Caco-2 (cell line): ENCODE measurements at regions of chr2 and their contacts with region 1.

Region 1: DNA sequence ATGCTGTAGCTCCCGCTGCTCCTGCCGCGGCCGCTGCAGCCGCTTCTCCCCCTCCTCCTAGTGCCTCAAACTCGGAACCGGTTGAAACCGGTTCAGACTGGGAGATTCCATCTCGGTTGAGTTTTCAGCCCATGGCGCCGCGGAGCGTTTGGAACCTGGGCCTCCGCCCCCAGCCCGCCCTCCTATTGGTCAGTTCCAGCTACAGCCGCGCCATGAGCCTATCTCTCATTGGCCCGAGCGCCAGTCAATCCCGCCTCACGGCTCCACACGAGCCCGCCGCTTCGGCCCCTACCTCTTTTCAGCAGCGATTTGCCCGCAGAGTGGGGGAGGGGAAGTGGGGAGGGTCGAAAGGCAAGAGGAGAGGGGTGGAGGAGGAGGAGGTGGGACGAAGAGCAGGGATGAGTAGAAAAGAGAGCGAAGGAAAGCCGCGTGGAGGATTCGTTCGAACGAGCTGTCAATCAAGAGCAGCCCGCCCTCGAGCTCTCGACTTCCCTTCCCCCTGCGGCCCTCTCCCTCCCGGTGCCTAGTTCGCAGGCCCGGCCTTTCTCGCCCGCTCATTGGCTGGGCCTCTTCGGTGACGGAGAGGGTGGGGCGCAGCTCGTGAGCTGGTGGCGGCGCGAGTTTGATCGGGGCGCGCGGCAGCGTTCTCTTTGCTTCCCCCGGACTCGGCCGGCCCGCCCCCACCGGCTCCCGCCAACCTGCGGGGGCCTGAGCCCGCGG is at the start of gene XPO1:
- DNase-seq: peak; percentile 100
- H3K4me3 ChIP-seq: peak within 1 kb of the TSS; percentile 99
- H3K4me3 Mint-ChIP-seq: peak within 1 kb of the TSS; percentile 94
- H3K27ac Mint-ChIP-seq: peak within 1 kb of the TSS; percentile 94
- H3K4me1 ChIP-seq: peaks cover 9% of the 10 kb centered on the region
- H3K4me1 Mint-ChIP-seq: no peaks in the 10 kb centered on the region
- H3K27me3 ChIP-seq: no peaks in the 10 kb centered on the region
- H3K27me3 Mint-ChIP-seq: no peaks in the 10 kb centered on the region
- CTCF ChIP-seq: no peak
- total RNA-seq, gene XPO1: 218 and 241 TPM in 2 replicates

Region 2: DNA sequence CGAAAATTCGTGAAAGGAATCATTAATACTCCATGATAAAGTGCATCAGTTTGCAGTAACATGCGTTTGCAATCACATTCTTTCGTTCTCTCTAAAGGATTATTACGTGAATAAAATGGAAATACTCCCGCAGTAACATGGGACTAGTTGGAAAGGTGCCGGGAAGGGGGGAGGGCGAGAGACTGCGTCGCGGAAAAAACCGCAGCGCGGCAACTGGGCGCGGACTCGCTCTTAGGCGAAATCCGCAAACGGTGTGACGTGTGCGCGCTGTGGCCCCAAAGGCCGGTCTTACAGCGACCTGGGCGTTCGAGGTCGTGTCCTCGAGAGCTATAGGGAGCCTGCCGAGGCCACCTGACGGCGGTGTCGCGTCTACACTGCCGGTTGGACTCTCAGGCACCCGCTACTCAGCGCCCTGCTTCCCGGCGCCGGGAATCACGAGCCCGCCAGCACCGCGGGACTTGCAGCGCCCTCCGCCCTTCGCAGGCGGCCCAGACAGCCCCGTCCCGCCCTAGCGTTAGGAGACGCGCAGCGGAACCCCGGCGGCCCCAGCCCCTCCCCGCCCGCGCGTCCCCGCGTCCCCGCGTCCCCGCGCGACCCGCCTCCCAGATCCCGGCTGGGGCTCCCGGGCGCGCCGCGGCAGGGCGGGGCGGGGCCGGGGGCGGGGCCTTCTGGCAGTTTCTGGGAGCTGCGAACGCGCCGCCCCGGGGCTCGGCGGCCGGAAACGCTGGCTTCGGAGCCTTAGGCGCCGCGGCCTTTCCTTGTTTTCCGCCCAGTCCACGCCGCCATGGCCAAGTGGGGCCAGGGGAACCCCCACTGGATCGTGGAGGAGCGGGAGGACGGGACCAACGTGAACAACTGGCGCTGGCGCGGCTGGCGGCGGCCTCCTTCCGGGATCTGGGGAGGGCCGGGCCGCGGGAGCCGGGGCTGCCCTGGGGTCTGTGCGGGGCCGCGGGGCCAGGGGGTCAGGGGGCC is 361.3 kb before region 1 on chr2:
- CTCF ChIA-PET with region 1: no interaction called
- POLR2A ChIA-PET with region 1: no interaction called
- intact Hi-C with region 1: loop called (anchors 5 kb)
- DNase-seq: peak; percentile 96 to 97
- H3K4me3 ChIP-seq: peak overlapping the region; percentile 82
- H3K4me3 Mint-ChIP-seq: peak overlapping the region; percentile 83
- H3K27ac Mint-ChIP-seq: peak overlapping the region; percentile 80
- H3K4me1 ChIP-seq: peaks cover 16% of the 10 kb centered on the region; the same call in 1 of the 2 replicates
- H3K4me1 Mint-ChIP-seq: peaks cover 16% of the 10 kb centered on the region
- H3K27me3 ChIP-seq: no peaks in the 10 kb centered on the region
- H3K27me3 Mint-ChIP-seq: no peaks in the 10 kb centered on the region
- CTCF ChIP-seq: peak in 1 of 2 experiments; percentile 13

Region 3: GRCh38 chr2:61288070-61288841 is 250.1 kb before region 1 on chr2:
- CTCF ChIA-PET with region 1: no interaction called
- POLR2A ChIA-PET with region 1: no interaction called
- intact Hi-C with region 1: no loop called
- DNase-seq: peak in 1 of 2 experiments; percentile 26
- H3K4me3 ChIP-seq: no peak overlapping the region
- H3K4me3 Mint-ChIP-seq: no peak overlapping the region
- H3K27ac Mint-ChIP-seq: peak overlapping the region; percentile 86
- H3K4me1 ChIP-seq: peaks cover 6% of the 10 kb centered on the region; the same call in 1 of the 2 replicates
- H3K4me1 Mint-ChIP-seq: no peaks in the 10 kb centered on the region
- H3K27me3 ChIP-seq: no peaks in the 10 kb centered on the region
- H3K27me3 Mint-ChIP-seq: no peaks in the 10 kb centered on the region
- CTCF ChIP-seq: no peak

Region 4: DNA sequence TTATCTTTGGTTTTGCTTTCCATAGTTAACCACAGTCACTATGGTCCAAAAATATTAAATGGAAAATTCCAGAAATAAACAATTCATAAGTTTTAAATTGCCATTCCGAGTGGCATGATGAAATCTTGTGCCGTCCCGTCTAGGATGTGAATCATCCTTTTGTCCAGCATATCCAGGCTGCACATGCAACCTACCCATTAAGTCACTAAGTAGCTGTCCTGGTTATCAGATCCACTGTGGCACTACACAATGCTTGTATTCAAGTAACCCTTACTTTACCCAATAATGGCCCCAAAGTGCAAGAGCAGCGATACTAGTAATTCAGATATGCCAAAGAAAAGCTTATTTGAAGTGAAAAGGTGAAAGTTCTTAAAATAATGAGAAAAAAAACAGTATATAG is 78.2 kb before region 1 on chr2:
- CTCF ChIA-PET with region 1: no interaction called
- POLR2A ChIA-PET with region 1: no interaction called
- intact Hi-C with region 1: no loop called
- DNase-seq: no peak
- H3K4me3 ChIP-seq: no peak overlapping the region
- H3K4me3 Mint-ChIP-seq: no peak overlapping the region
- H3K27ac Mint-ChIP-seq: no peak overlapping the region
- H3K4me1 ChIP-seq: peaks cover 13% of the 10 kb centered on the region; the same call in 1 of the 2 replicates
- H3K4me1 Mint-ChIP-seq: peaks cover 12% of the 10 kb centered on the region
- H3K27me3 ChIP-seq: no peaks in the 10 kb centered on the region
- H3K27me3 Mint-ChIP-seq: no peaks in the 10 kb centered on the region
- CTCF ChIP-seq: no peak

Region 5: DNA sequence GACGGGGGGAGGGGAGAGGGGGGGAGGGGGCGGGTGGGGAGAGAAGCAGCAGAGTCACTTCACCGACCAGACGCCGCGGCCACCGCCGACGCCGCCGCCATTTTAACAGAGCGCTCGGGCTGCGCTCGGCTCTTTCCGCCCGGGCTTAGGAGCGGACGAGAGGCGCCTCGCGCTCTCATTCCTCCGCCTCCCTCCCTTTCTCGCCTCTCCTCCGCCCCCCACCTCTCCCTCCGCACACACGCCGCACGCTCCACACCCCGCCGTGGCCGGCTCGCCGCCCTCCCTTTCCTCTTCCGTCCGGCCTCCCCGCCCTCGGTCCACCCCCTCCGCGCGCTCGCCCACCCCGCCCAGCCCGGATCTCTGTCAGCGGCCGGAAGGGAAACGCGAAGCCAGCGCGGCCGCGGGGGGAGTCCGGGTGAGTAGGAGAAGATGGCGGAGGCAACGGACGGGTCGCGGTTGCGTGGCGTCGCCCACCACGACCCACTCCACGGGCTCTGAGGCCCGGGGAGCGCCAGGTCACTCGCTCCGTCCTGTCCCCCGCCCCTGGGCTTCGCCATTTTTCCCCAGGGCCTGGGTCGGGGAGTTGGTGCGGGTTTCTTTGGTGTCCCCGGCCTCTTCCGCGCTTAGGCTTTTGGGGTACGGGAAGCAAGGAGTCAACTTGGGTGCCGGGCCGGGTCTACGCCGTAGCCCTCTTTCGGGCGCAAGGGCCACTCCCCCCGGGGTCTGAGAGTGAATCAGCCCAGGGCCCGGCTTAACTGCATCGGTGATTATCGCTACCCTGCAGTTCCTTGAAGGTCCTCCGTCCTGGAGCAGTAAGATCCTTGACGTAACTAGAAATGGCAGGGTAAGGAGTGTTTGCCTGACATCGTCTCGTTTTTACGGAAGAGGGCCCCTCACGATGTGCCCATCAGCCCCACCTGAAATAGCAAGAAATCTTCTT is 67.1 kb before region 1 on chr2 and contains the start of gene USP34:
- CTCF ChIA-PET with region 1: no interaction called
- POLR2A ChIA-PET with region 1: no interaction called
- intact Hi-C with region 1: loop called (anchors 1 kb)
- DNase-seq: peak; percentile 96 to 97
- H3K4me3 ChIP-seq: peak within 1 kb of the TSS; percentile 96
- H3K4me3 Mint-ChIP-seq: peak within 1 kb of the TSS; percentile 100
- H3K27ac Mint-ChIP-seq: peak within 1 kb of the TSS; percentile 100
- H3K4me1 ChIP-seq: peaks cover 16% of the 10 kb centered on the region
- H3K4me1 Mint-ChIP-seq: peaks cover 9% of the 10 kb centered on the region
- H3K27me3 ChIP-seq: no peaks in the 10 kb centered on the region
- H3K27me3 Mint-ChIP-seq: no peaks in the 10 kb centered on the region
- CTCF ChIP-seq: no peak
- total RNA-seq, gene USP34: 100 and 101 TPM in 2 replicates

Region 6: DNA sequence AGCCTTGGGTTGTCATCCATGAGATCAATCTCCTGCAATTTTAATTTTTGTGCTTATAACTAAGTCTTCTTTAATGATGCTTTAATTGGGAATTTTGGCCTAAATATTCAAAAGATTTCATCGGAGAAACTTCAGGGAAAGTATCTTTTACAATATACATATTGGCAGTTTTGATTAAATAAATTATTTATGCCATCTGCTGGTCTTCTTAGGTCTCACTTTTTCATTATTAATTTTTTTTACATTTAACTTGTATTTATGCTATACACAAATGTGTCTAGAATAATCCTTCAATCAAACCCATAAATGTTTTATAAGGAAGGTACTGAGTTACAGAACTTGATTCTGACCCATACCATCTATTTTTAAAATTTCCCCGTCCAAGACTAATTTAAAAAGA is 94.9 kb after region 1 on chr2:
- CTCF ChIA-PET with region 1: interaction called, 3 read pairs
- POLR2A ChIA-PET with region 1: interaction called, 10 read pairs
- intact Hi-C with region 1: loop called (anchors 5 kb)
- DNase-seq: no peak
- H3K4me3 ChIP-seq: no peak overlapping the region
- H3K4me3 Mint-ChIP-seq: no peak overlapping the region
- H3K27ac Mint-ChIP-seq: no peak overlapping the region
- H3K4me1 ChIP-seq: peaks cover 34% of the 10 kb centered on the region
- H3K4me1 Mint-ChIP-seq: peaks cover 46% of the 10 kb centered on the region
- H3K27me3 ChIP-seq: no peaks in the 10 kb centered on the region
- H3K27me3 Mint-ChIP-seq: no peaks in the 10 kb centered on the region
- CTCF ChIP-seq: no peak

Region 7: GRCh38 chr2:61639721-61640120 is 101.4 kb after region 1 on chr2:
- CTCF ChIA-PET with region 1: interaction called, 3 read pairs
- POLR2A ChIA-PET with region 1: interaction called, 3 read pairs
- intact Hi-C with region 1: loop called (anchors 5 kb)
- DNase-seq: no peak
- H3K4me3 ChIP-seq: no peak overlapping the region
- H3K4me3 Mint-ChIP-seq: no peak overlapping the region
- H3K27ac Mint-ChIP-seq: peak overlapping the region; percentile 78
- H3K4me1 ChIP-seq: peaks cover 47% of the 10 kb centered on the region
- H3K4me1 Mint-ChIP-seq: peaks cover 41% of the 10 kb centered on the region
- H3K27me3 ChIP-seq: no peaks in the 10 kb centered on the region
- H3K27me3 Mint-ChIP-seq: no peaks in the 10 kb centered on the region
- CTCF ChIP-seq: no peak

Region 8: DNA sequence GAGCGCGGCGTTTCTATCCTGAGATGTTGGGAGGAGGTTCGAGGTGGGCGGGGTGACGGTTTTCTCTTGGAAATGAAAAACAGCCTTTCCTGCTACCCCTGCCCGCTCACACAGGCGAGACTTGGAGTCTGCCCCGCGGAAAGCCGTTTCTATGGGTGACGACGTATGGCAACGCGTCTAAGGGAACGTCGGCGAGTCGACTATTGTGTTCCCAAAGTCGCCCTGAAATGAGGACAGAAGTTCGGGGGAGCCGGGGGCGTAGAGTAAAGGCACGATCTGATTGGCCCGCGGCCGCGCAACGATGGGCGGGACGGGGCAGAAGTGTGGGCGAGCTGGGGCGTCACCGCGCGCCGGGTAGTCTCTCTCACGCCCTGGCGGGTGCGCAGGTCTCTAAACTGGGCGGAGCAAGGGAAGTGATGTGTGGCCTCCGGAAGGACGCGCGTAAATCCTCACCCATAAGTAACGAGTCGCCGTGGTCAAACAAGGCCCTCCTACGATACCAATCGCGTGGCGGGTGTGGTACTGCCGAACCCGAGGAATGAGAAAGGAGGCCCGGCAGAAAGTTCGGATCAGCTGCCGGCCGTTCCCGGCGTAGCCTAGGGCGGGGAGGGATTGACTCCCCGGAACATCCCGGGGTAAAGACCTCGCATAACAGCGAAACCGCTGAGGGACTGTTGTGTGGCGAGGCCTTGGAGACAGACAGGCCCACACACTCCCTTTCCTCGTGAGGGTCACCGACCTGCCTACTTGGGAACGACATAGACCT is 225.9 kb after region 1 on chr2:
- CTCF ChIA-PET with region 1: no interaction called
- POLR2A ChIA-PET with region 1: interaction called, 6 read pairs
- intact Hi-C with region 1: loop called (anchors 2 kb)
- DNase-seq: peak; percentile 98 to 99
- H3K4me3 ChIP-seq: peak overlapping the region; percentile 56
- H3K4me3 Mint-ChIP-seq: peak overlapping the region; percentile 72
- H3K27ac Mint-ChIP-seq: peak overlapping the region; percentile 97
- H3K4me1 ChIP-seq: no peaks in the 10 kb centered on the region
- H3K4me1 Mint-ChIP-seq: no peaks in the 10 kb centered on the region
- H3K27me3 ChIP-seq: no peaks in the 10 kb centered on the region
- H3K27me3 Mint-ChIP-seq: no peaks in the 10 kb centered on the region
- CTCF ChIP-seq: no peak

Region 9: DNA sequence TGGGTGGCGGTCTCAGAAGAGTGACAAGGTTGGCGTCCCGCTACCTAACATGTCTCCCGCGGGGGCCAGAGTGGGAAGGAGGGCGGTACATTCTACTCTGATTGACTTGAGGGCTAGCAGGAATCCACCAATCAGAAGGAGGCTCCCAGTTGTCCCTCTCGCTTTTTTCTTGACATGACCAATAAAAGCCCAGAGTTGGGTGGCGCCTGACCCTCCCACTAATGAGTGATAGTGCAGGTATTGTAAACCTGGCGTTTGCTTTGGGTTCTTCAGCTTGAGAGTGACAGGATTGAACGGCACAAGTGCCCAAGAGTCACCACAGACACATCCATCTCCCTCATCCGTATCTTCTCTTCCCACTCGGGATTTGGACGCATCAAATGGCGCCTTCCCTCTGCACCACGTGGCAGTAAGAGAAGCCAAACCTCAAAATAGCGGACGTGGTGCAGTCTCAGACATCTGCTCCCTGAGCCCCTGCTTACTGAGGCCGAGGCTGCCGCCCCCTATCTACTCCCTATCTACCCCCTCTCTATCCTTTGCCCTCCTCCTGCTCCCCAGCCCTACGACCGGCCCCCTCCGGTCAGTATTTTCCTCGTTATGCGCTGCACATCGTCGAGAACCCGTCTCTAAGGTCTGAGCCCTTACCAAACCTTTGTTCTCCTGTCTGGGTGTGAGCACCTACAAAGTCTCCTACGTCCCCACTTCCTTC is 316.3 kb after region 1 on chr2:
- CTCF ChIA-PET with region 1: no interaction called
- POLR2A ChIA-PET with region 1: interaction called, 3 read pairs
- intact Hi-C with region 1: loop called (anchors 1 kb)
- DNase-seq: peak; percentile 96 to 97
- H3K4me3 ChIP-seq: peak overlapping the region; percentile 96
- H3K4me3 Mint-ChIP-seq: peak overlapping the region; percentile 84
- H3K27ac Mint-ChIP-seq: peak overlapping the region; percentile 83
- H3K4me1 ChIP-seq: peaks cover 5% of the 10 kb centered on the region
- H3K4me1 Mint-ChIP-seq: no peaks in the 10 kb centered on the region
- H3K27me3 ChIP-seq: no peaks in the 10 kb centered on the region
- H3K27me3 Mint-ChIP-seq: no peaks in the 10 kb centered on the region
- CTCF ChIP-seq: no peak